ENCODE measurements at regions of chr14 and their contacts with region 1.

Region 1: DNA sequence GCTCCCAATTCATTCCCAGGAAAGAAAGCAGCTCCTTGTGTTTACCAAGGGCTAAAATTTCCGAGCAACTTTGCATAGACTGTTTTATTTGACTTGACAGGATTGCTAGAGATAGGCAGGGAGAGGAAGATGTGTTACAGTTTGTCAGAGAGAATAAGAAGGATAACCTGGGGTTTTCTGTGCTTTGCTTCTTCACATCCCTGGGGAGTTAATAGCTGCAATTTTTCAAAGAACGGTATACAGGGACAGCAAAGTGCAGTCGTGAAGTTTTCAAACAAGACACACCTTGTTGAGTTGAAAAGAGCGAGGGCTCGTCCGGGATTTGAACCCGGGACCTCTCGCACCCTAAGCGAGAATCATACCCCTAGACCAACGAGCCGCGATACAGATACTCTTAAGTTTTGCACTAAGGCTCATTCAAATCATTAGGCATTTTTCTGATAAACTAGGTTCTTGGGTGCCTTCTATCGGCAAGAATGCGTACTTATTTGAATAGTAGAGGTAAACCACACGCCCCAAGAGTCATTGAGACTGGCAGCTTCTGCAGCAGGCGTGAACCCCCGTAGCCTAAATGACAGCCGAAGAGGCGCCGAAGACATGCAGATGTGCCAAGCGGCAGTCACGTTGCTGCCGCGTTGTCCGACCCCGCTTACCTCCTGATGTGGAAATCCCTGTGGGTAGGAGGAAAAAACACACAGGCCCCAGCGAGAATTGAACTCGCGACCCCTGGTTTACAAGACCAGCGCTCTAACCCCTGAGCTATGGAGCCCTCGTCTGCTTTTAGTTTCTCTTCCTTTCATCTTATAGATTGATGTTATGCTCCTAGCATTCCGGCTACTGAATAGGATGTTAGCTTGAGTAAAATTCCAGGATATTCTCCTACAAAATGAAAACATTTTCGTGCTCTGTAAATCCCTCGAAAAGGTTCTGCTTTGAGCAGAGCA is 22.2 kb upstream of the RNASE12 start:
- DNase-seq: peak; percentile 77
- H3K4me3 Mint-ChIP-seq: no peak overlapping the region
- H3K27ac Mint-ChIP-seq: no peak overlapping the region
- H3K4me1 Mint-ChIP-seq: peaks cover 11% of the 10 kb centered on the region
- H3K27me3 Mint-ChIP-seq: peaks cover 2% of the 10 kb centered on the region

Region 2: DNA sequence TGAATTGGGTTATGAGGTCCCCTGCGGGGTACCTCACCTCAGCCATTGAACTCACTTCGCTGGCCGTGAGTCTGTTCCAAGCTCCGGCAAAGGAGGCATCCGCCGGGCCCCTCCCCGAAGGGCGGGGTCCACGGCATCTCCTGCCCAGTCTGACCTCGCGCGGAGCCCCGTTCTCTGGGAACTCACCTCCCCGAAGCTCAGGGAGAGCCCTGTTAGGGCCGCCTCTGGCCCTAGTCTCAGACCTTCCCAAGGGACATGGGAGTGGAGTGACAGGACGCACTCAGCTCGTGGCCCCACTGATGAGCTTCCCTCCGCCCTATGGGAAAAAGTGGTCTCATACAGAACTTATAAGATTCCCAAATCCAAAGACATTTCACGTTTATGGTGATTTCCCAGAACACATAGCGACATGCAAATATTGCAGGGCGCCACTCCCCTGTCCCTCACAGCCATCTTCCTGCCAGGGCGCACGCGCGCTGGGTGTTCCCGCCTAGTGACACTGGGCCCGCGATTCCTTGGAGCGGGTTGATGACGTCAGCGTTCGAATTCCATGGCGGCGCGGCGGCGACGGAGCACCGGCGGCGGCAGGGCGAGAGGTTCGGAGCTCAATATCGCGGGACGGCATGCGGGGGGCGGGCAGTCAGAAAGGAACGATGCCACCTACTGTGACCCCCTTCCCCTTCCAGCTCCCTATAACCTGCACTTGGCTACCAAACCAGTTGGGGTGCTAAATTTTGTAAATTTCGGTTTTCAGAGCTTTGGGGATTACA is 270.1 kb before region 1 on chr14 and contains the start of gene PARP2:
- intact Hi-C with region 1: loop called (anchors 1 kb)
- DNase-seq: peak; percentile 92
- H3K4me3 Mint-ChIP-seq: peak within 1 kb of the TSS; percentile 95
- H3K27ac Mint-ChIP-seq: peak within 1 kb of the TSS; percentile 96
- H3K4me1 Mint-ChIP-seq: peaks cover 19% of the 10 kb centered on the region
- H3K27me3 Mint-ChIP-seq: peaks cover 6% of the 10 kb centered on the region
- total RNA-seq, gene PARP2: 32.5 and 36.6 TPM in 2 replicates

Region 3: DNA sequence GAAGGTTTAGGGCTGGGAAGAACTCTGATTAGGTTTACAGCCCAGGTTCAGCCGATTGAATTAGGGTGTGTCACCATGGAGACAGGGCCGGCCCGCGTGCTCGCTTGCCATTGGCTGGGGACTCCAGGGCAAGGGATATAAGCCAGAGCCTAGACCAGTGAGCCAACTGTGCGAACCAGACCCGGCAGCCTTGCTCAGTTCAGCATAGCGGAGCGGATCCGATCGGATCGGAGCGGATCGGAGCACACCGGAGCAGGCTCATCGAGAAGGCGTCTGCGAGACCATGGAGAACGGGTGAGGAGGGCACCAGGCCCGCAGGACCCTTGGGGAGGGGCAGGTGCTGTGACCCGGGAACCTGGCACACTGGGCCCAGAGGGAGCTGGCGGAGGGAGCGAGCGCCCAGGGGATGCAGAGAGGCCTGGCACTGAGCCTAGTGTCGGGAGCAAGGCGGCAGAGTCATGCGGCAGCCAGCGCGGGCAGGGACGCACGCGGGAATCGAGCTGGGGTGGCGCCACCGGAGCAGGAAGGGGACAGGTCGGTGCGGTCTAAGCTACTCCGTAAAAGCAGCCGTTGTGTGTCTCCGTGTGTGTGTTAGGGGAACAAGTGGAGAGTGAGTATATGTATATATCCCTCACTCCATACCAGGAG is 144.0 kb before region 1 on chr14 and contains the start of gene PNP:
- intact Hi-C with region 1: loop called (anchors 1 kb)
- DNase-seq: peak; percentile 85
- H3K4me3 Mint-ChIP-seq: peak within 1 kb of the TSS; percentile 95
- H3K27ac Mint-ChIP-seq: peak within 1 kb of the TSS; percentile 96
- H3K4me1 Mint-ChIP-seq: peaks cover 40% of the 10 kb centered on the region
- H3K27me3 Mint-ChIP-seq: peaks cover 3% of the 10 kb centered on the region
- total RNA-seq, gene PNP: 149 TPM in 2 replicates

Region 4: GRCh38 chr14:20485900-20486299 is 127.5 kb before region 1 on chr14:
- intact Hi-C with region 1: no loop called
- DNase-seq: no peak
- H3K4me3 Mint-ChIP-seq: no peak overlapping the region
- H3K27ac Mint-ChIP-seq: no peak overlapping the region
- H3K4me1 Mint-ChIP-seq: peaks cover 37% of the 10 kb centered on the region
- H3K27me3 Mint-ChIP-seq: peaks cover 2% of the 10 kb centered on the region

Region 5: DNA sequence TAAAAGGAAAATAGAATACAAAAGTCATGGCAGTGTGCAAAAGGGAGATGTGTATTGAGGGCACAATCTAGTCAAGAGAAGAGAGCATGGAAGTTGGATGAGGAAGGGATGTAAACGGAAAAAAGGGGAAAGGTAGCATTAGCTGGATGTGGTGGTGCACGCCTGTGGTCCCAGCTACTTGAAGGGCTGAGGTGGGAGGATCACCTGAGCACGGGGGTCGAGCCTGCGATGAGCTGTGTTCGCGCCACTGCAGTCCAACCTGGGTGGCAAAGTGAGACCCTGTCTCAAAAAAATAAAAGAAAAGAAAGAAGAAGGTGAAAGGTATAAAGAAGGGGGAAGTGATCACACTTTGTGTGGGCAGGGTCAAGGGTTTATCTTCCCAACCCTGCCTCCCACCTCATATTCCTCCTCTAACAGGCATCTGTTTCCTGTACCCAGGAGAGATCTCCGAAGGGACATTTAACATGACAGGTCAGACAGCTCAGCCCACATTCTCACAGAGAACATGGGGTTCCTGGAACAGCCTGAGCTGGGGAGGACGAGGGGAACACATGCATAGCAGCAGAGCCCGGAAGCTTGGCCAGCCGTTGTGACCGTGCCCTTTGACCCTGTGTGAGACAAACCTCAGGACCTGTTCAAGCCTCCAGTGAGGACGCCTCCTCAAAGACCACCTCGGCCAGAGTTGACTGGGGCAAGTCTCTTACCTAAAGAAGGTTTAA is 34.4 kb before region 1 on chr14:
- intact Hi-C with region 1: no loop called
- DNase-seq: no peak
- H3K4me3 Mint-ChIP-seq: no peak overlapping the region
- H3K27ac Mint-ChIP-seq: no peak overlapping the region
- H3K4me1 Mint-ChIP-seq: no peaks in the 10 kb centered on the region
- H3K27me3 Mint-ChIP-seq: no peaks in the 10 kb centered on the region

Region 6: GRCh38 chr14:20632682-20633428 is 19.5 kb after region 1 on chr14:
- intact Hi-C with region 1: loop called (anchors 1 kb)
- DNase-seq: peak; percentile 53
- H3K4me3 Mint-ChIP-seq: peak overlapping the region; percentile 85
- H3K27ac Mint-ChIP-seq: peak overlapping the region; percentile 91
- H3K4me1 Mint-ChIP-seq: peaks cover 56% of the 10 kb centered on the region
- H3K27me3 Mint-ChIP-seq: peaks cover 76% of the 10 kb centered on the region

Region 7: GRCh38 chr14:20682435-20683124 is 69.2 kb after region 1 on chr14:
- intact Hi-C with region 1: loop called (anchors 1 kb)
- DNase-seq: peak; percentile 65
- H3K4me3 Mint-ChIP-seq: no peak overlapping the region
- H3K27ac Mint-ChIP-seq: no peak overlapping the region
- H3K4me1 Mint-ChIP-seq: peaks cover 10% of the 10 kb centered on the region
- H3K27me3 Mint-ChIP-seq: no peaks in the 10 kb centered on the region

Region 8: GRCh38 chr14:20855652-20856291 is 242.4 kb after region 1 on chr14:
- intact Hi-C with region 1: loop called (anchors 5 kb)
- DNase-seq: peak; percentile 25
- H3K4me3 Mint-ChIP-seq: no peak overlapping the region
- H3K27ac Mint-ChIP-seq: no peak overlapping the region
- H3K4me1 Mint-ChIP-seq: peaks cover 9% of the 10 kb centered on the region
- H3K27me3 Mint-ChIP-seq: peaks cover 13% of the 10 kb centered on the region

Measured in activated T-helper 1 cell treated with anti-CD3 and anti-CD28 coated beads, Interleukin-12 subunit alpha, Interleukin-12 subunit beta, Interleukin-2, Interleukin-4 antibody, amounts not matched to agents 30 ng/mL and 10 ng/mL and 1 ng/mL, durations not matched to agents 14 hours and 24 hours and 36 hours (primary cell).